Natural killer cell (primary cell): ENCODE measurements at regions of chr17 and their contacts with region 1.

Region 1: GRCh38 chr17:80307994-80308691 is 47.5 kb downstream of the RNF213 start:
- DNase-seq: no peak
- ATAC-seq: no peak
- H3K4me3 ChIP-seq: no peak overlapping the region
- H3K4me3 Mint-ChIP-seq: no peak overlapping the region
- H3K27ac ChIP-seq: no peak overlapping the region
- H3K27ac Mint-ChIP-seq: peak overlapping the region; percentile 17 to 79
- H3K4me1 ChIP-seq: peaks cover 2% of the 10 kb centered on the region
- H3K4me1 Mint-ChIP-seq: peaks cover 0 to 11% of the 10 kb centered on the region in 2 donors
- H3K27me3 ChIP-seq: no peaks in the 10 kb centered on the region
- H3K27me3 Mint-ChIP-seq: no peaks in the 10 kb centered on the region
- CTCF ChIP-seq: no peak

Region 2: DNA sequence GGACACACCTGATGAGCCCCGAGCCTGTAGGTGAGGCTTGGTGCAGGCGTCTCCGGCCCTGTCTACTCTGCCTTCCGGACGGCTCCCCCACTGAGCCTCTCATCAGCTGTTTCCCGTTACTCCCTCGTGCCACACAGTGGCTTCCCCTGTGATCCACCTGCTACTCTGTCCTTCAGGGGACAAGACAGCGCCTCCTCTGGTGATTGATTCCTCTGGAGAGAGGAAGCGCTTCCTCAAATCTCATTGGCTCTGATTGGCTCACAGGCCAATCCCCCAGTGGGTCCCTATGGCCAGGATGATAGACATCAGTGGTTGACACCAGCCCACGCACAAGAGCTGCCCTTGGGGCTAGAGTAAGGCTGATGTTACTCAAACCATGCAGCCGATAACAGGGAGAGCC is 23.5 kb before region 1 on chr17:
- intact Hi-C with region 1: no loop called
- DNase-seq: no peak
- ATAC-seq: peak in 1 of 3 donors; percentile 32
- H3K4me3 ChIP-seq: no peak overlapping the region
- H3K4me3 Mint-ChIP-seq: no peak overlapping the region
- H3K27ac ChIP-seq: no peak overlapping the region
- H3K27ac Mint-ChIP-seq: peak overlapping the region; percentile 71 to 82
- H3K4me1 ChIP-seq: peaks cover 21% of the 10 kb centered on the region
- H3K4me1 Mint-ChIP-seq: peaks cover 17 to 43% of the 10 kb centered on the region in 2 donors
- H3K27me3 ChIP-seq: no peaks in the 10 kb centered on the region
- H3K27me3 Mint-ChIP-seq: no peaks in the 10 kb centered on the region
- CTCF ChIP-seq: no peak

Region 3: DNA sequence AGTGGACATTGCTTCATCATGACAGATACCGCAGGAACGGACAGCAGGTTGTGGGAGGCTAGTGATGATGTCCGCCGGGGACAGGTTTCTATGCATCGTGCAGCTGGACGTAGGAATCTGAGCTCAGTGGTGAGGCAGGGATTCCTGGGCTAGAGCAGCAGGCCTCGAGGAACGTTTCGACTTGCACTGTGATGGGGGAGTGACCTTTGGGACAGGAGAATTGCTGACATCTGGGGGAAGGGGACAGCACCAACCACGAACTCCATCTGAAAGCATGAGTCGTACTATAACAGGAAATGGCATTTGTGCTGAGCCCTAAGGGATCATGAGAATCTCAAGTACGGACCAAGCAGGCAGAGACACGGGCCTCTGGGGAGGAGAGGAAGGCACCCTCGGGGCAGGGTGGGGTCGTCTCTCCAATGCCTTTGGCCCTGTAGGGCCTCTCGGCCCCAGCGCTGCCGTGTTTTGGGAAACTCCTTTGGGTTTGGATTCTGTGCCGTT is 41.1 kb after region 1 on chr17:
- intact Hi-C with region 1: no loop called
- DNase-seq: no peak
- ATAC-seq: no peak
- H3K4me3 ChIP-seq: no peak overlapping the region
- H3K4me3 Mint-ChIP-seq: no peak overlapping the region
- H3K27ac ChIP-seq: no peak overlapping the region
- H3K27ac Mint-ChIP-seq: peak overlapping the region in 1 of 2 donors; percentile 60
- H3K4me1 ChIP-seq: no peaks in the 10 kb centered on the region
- H3K4me1 Mint-ChIP-seq: peaks cover 8 to 13% of the 10 kb centered on the region in 2 donors
- H3K27me3 ChIP-seq: no peaks in the 10 kb centered on the region
- H3K27me3 Mint-ChIP-seq: no peaks in the 10 kb centered on the region
- CTCF ChIP-seq: no peak

Region 4: DNA sequence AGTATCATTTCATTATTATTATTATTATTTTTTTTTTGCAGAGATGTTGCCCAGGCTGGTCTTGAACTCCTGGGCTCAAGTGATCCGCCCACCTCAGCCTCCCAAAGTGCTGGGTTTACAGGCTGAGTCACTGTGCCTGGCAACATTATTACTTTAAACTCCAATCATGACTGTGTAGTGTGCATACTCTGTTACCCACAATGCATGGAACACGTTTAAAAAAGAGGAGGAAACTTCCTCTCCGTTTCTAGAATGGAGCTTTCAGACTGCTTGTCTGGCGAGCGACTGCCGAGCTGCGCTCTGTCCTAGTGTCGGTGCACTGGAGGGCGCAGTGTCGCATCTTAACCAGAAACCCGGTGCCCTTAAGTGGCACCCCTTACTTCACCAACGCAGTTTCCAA is 1812.0 kb after region 1 on chr17:
- intact Hi-C with region 1: loop called (anchors 10 kb)
- DNase-seq: peak in 1 of 2 donors; percentile 57
- ATAC-seq: no peak
- H3K4me3 ChIP-seq: no peak overlapping the region
- H3K4me3 Mint-ChIP-seq: no peak overlapping the region
- H3K27ac ChIP-seq: no peak overlapping the region
- H3K27ac Mint-ChIP-seq: no peak overlapping the region
- H3K4me1 ChIP-seq: no peaks in the 10 kb centered on the region
- H3K4me1 Mint-ChIP-seq: no peaks in the 10 kb centered on the region
- H3K27me3 ChIP-seq: no peaks in the 10 kb centered on the region
- H3K27me3 Mint-ChIP-seq: no peaks in the 10 kb centered on the region
- CTCF ChIP-seq: no peak